Endothelial cell of umbilical vein (primary cell): ENCODE measurements at regions of chr21 and their contacts with region 1.

Region 1: GRCh38 chr21:46097336-46098293 is at the start of gene COL6A2:
- DNase-seq: no peak
- H3K4me3 ChIP-seq: peak within 1 kb of the TSS in 1 of 3 experiments; percentile 29
- H3K27ac ChIP-seq: no peak within 1 kb of the TSS
- H3K4me1 ChIP-seq: no peaks in the 10 kb centered on the region
- H3K27me3 ChIP-seq: peaks cover 23 to 33% of the 10 kb centered on the region in 2 experiments
- CTCF ChIP-seq: no peak
- POLR2A ChIP-seq: no peak
- total RNA-seq, gene COL6A2: 2.6 and 6.1 TPM in 2 replicates

Region 2: DNA sequence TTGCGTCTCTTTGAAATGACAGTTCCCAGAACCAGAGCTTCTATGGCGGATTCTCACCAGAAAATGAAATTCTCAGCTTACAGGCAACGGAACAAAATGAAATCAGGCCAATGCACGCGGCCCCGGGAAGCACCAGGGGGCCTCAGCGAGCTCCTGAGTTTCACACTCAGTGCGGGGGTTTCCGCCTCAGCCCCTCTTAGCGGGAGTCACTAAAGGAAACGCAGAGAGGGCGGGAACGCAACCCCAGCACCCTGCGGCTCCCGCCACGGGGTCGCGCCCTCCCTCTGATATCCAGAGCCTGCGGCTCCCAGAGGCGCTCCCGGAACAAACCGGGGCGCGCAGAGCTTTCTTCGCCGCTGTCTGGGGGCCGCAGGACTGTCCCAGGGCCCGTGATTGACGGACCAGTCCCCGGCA is 123.9 kb before region 1 on chr21:
- CTCF ChIA-PET with region 1: interaction called, 4 read pairs
- POLR2A ChIA-PET with region 1: no interaction called
- dilution Hi-C with region 1: no loop called
- intact Hi-C with region 1: loop called (anchors 5 kb)
- DNase-seq: peak; percentile 77
- H3K4me3 ChIP-seq: peak overlapping the region in 2 of 3 experiments; percentile 34 to 56
- H3K27ac ChIP-seq: peak overlapping the region; percentile 35
- H3K4me1 ChIP-seq: peaks cover 29% of the 10 kb centered on the region
- H3K27me3 ChIP-seq: peaks cover 0 to 2% of the 10 kb centered on the region in 2 experiments
- CTCF ChIP-seq: peak; percentile 70 to 83
- POLR2A ChIP-seq: no peak

Region 3: DNA sequence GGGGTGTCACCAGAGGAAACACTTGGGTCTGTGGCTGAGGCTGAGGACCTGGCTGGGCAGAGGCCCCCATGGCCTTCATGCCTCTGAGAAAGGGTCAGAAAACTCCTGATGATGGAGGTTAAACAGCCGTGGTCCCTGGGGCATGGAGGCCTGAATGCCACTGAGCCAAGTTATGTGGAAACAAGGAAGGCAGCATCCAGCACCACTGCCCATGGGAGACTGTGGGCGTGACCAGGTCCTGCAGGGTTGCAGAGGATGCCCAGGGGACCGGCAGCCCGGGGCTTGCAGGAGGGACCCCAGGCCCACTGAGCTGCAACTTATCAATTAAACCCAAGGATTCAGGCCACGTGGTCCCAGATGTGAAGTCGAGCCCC is 18.6 kb before region 1 on chr21:
- CTCF ChIA-PET with region 1: no interaction called
- POLR2A ChIA-PET with region 1: no interaction called
- dilution Hi-C with region 1: no loop called
- intact Hi-C with region 1: no loop called
- DNase-seq: no peak
- H3K4me3 ChIP-seq: no peak overlapping the region
- H3K27ac ChIP-seq: no peak overlapping the region
- H3K4me1 ChIP-seq: no peaks in the 10 kb centered on the region
- H3K27me3 ChIP-seq: no peaks in the 10 kb centered on the region
- CTCF ChIP-seq: no peak
- POLR2A ChIP-seq: no peak